Naive thymus-derived CD4-positive, alpha-beta T cell (primary cell): ENCODE measurements at regions of chr10 and their contacts with region 1.

Region 1: DNA sequence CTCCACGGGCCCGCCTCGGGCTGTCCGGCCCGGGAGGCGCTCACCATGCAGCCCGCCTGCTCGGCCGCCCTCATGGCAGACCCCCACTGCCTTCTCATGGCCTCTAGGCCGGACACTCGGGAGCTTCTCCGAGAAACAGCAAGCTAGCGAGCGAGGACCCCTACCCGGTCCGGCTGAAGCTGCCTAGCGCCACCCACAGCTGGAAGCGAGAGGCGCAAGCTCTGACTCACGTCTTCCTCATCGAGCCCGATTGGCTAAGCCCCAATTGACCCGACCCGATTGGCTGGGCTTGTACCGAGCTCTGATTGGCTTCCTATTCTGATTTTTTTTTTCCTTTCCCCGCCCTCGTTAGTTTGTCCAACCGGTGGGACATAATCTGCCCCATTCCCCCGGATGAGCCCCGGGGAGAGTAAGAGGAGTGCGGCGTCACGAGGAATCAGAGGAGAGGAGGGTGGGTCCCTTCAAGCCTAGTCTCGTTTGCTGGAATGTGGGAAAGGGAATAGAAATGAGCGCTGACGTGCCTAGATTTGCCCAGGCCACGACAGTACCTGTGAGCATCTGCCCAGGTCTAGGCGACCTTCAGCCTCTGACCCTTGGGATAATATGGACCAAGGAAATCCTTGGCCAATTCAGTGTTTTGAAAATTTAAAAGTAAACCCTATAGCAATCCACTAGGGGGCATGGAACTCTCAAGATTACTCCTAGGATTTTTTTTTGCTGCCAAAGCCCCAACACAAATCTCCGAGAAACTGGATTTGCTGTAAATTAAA is at the start of gene TYSND1:
- DNase-seq: peak; percentile 79 to 95 (median 92)
- ATAC-seq: peak; percentile 92
- H3K4me3 ChIP-seq: peak within 1 kb of the TSS; percentile 79
- H3K4me3 Mint-ChIP-seq: peak within 1 kb of the TSS; percentile 89 to 96 (median 93)
- H3K27ac ChIP-seq: peak within 1 kb of the TSS; percentile 80
- H3K27ac Mint-ChIP-seq: peak within 1 kb of the TSS; percentile 87 to 98 (median 95)
- H3K4me1 ChIP-seq: peaks cover 13 to 22% of the 10 kb centered on the region in 2 donors
- H3K4me1 Mint-ChIP-seq: peaks cover 15 to 45% (median 36%) of the 10 kb centered on the region in 7 donors
- H3K27me3 ChIP-seq: no peaks in the 10 kb centered on the region
- H3K27me3 Mint-ChIP-seq: no peaks in the 10 kb centered on the region
- total RNA-seq, gene TYSND1: 13.8 to 35.9 (median 19.5) TPM

Region 2: DNA sequence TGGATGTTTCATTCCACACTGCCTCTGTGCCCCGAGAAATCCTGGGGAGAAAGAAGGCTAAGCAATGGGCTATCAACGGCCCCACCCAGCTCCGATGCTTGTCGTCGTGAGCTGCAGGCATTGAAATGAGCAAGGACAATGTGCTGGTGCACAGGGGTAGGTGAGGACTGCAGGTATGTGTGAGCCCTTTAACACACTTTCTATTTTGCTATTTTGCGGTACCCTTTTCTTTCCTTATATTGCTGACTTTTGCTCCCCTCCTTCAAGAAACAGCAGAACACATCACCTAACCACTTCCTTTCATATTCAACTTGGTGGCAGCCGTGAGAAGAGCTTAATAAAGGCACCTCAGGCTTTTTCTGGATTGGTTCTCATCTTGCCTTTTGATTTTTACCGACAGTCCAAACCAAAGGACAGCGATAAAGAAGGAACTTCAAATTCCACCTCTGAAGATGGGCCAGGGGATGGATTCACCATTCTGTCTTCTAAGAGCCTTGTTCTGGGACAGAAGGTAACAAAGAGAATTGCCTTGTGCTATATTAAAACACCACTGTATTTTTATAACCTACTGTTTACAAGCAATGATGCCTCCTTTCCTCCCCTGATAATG is 53.2 kb before region 1 on chr10:
- CTCF ChIA-PET with region 1: interaction called, 28 read pairs
- POLR2A ChIA-PET with region 1: interaction called, 44 read pairs
- intact Hi-C with region 1: loop called (anchors 1 kb)
- DNase-seq: peak in 7 of 9 donors; percentile 28 to 52 (median 42)
- ATAC-seq: peak; percentile 75
- H3K4me3 ChIP-seq: peak overlapping the region; percentile 73
- H3K4me3 Mint-ChIP-seq: peak overlapping the region; percentile 70 to 96 (median 89)
- H3K27ac ChIP-seq: peak overlapping the region; percentile 79
- H3K27ac Mint-ChIP-seq: peak overlapping the region; percentile 77 to 99 (median 93)
- H3K4me1 ChIP-seq: peaks cover 17 to 29% of the 10 kb centered on the region in 2 donors
- H3K4me1 Mint-ChIP-seq: peaks cover 18 to 64% (median 57%) of the 10 kb centered on the region in 7 donors
- H3K27me3 ChIP-seq: no peaks in the 10 kb centered on the region
- H3K27me3 Mint-ChIP-seq: no peaks in the 10 kb centered on the region

Region 3: GRCh38 chr10:70162892-70163201 is 16.2 kb after region 1 on chr10:
- CTCF ChIA-PET with region 1: interaction called, 16 read pairs
- POLR2A ChIA-PET with region 1: interaction called, 139 read pairs
- intact Hi-C with region 1: loop called (anchors 1 kb)
- DNase-seq: peak in 6 of 9 donors; percentile 27 to 53 (median 43)
- ATAC-seq: peak; percentile 84
- H3K4me3 ChIP-seq: no peak overlapping the region
- H3K4me3 Mint-ChIP-seq: peak overlapping the region; percentile 12 to 96 (median 78)
- H3K27ac ChIP-seq: peak overlapping the region; percentile 50
- H3K27ac Mint-ChIP-seq: peak overlapping the region; percentile 33 to 90 (median 81)
- H3K4me1 ChIP-seq: peaks cover 52 to 53% of the 10 kb centered on the region in 2 donors
- H3K4me1 Mint-ChIP-seq: peaks cover 47 to 83% (median 76%) of the 10 kb centered on the region in 7 donors
- H3K27me3 ChIP-seq: no peaks in the 10 kb centered on the region
- H3K27me3 Mint-ChIP-seq: no peaks in the 10 kb centered on the region

Region 4: GRCh38 chr10:70221030-70221429 is 74.4 kb after region 1 on chr10:
- CTCF ChIA-PET with region 1: interaction called, 6 read pairs
- POLR2A ChIA-PET with region 1: interaction called, 4 read pairs
- intact Hi-C with region 1: loop called in 1 of 2 experiments (anchors 2 kb)
- DNase-seq: no peak
- ATAC-seq: no peak
- H3K4me3 ChIP-seq: no peak overlapping the region
- H3K4me3 Mint-ChIP-seq: peak overlapping the region in 4 of 10 donors; percentile 8 to 74 (median 42)
- H3K27ac ChIP-seq: no peak overlapping the region
- H3K27ac Mint-ChIP-seq: peak overlapping the region in 6 of 9 donors; percentile 9 to 78 (median 31)
- H3K4me1 ChIP-seq: peaks cover 0 to 8% of the 10 kb centered on the region in 2 donors
- H3K4me1 Mint-ChIP-seq: peaks cover 9 to 23% (median 12%) of the 10 kb centered on the region in 7 donors
- H3K27me3 ChIP-seq: no peaks in the 10 kb centered on the region
- H3K27me3 Mint-ChIP-seq: no peaks in the 10 kb centered on the region

Region 5: GRCh38 chr10:70381471-70382421 is 235.1 kb after region 1 on chr10:
- CTCF ChIA-PET with region 1: no interaction called
- POLR2A ChIA-PET with region 1: no interaction called
- intact Hi-C with region 1: loop called (anchors 1 to 5 kb)
- DNase-seq: peak in 6 of 9 donors; percentile 25 to 53 (median 40)
- ATAC-seq: peak; percentile 43
- H3K4me3 ChIP-seq: peak overlapping the region; percentile 94
- H3K4me3 Mint-ChIP-seq: peak overlapping the region; percentile 82 to 92 (median 90)
- H3K27ac ChIP-seq: peak overlapping the region; percentile 32
- H3K27ac Mint-ChIP-seq: peak overlapping the region in 6 of 9 donors; percentile 17 to 86 (median 46)
- H3K4me1 ChIP-seq: peaks cover 4 to 6% of the 10 kb centered on the region in 2 donors
- H3K4me1 Mint-ChIP-seq: peaks cover 2 to 20% (median 10%) of the 10 kb centered on the region in 7 donors
- H3K27me3 ChIP-seq: no peaks in the 10 kb centered on the region
- H3K27me3 Mint-ChIP-seq: no peaks in the 10 kb centered on the region